ENCODE measurements at regions of chr9 and their contacts with region 1.

Region 1: DNA sequence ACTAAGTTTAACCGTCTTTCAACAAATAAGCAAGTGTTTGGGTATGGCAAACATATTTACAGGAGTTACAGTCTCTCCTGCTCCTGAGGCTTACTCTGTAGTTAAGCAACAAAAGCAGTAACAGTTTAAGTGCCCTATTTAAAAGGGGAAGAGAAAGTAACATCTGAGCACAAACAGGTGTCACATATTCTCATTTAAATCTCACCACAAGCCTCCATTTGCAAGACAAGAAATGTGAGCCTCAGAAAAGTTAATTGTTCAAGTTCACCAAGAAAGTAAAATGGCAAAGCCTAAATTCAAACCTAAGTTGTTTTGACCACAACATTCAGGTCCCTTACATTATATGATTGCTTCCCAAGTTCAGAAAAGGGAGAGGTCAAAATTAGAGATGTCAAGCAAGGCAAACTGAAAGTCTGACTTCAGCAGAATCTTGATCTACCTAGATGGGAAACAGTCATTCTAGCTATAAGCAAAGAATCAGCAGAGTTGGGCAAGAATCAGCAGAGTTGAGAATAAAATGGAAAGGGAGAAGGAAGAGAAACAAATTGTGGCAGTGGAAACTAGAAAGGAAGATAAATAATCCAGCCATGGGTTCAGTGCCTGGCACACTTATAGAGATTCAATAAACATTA is 93.4 kb downstream of the STRBP start:
- DNase-seq: no peak
- ATAC-seq: no peak
- H3K4me3 ChIP-seq: no peak overlapping the region
- H3K27ac ChIP-seq: no peak overlapping the region
- H3K4me1 ChIP-seq: no peaks in the 10 kb centered on the region
- H3K27me3 ChIP-seq: no peaks in the 10 kb centered on the region
- CTCF ChIP-seq: no peak
- POLR2A ChIP-seq: no peak
- RAD21 ChIP-seq: no peak

Region 2: GRCh38 chr9:123138163-123138562 is 36.8 kb before region 1 on chr9:
- CTCF ChIA-PET with region 1: no interaction called
- POLR2A ChIA-PET with region 1: no interaction called
- dilution Hi-C with region 1: no loop called
- in situ Hi-C with region 1: no loop called
- intact Hi-C with region 1: loop called (anchors 5 kb)
- DNase-seq: no peak
- ATAC-seq: no peak
- H3K4me3 ChIP-seq: no peak overlapping the region
- H3K27ac ChIP-seq: no peak overlapping the region
- H3K4me1 ChIP-seq: no peaks in the 10 kb centered on the region
- H3K27me3 ChIP-seq: no peaks in the 10 kb centered on the region
- CTCF ChIP-seq: no peak
- POLR2A ChIP-seq: no peak
- RAD21 ChIP-seq: no peak

Region 3: GRCh38 chr9:123251741-123252140 is 76.7 kb after region 1 on chr9:
- CTCF ChIA-PET with region 1: no interaction called
- POLR2A ChIA-PET with region 1: no interaction called
- dilution Hi-C with region 1: no loop called
- in situ Hi-C with region 1: no loop called
- intact Hi-C with region 1: loop called (anchors 5 kb)
- DNase-seq: no peak
- ATAC-seq: no peak
- H3K4me3 ChIP-seq: no peak overlapping the region
- H3K27ac ChIP-seq: no peak overlapping the region
- H3K4me1 ChIP-seq: no peaks in the 10 kb centered on the region
- H3K27me3 ChIP-seq: peaks cover 3% of the 10 kb centered on the region
- CTCF ChIP-seq: no peak
- POLR2A ChIP-seq: no peak
- RAD21 ChIP-seq: no peak

Measured in IMR-90 (cell line).